Heart left ventricle (tissue), 16 donors: ENCODE measurements at regions of chr17 and their contacts with region 1.

Region 1: DNA sequence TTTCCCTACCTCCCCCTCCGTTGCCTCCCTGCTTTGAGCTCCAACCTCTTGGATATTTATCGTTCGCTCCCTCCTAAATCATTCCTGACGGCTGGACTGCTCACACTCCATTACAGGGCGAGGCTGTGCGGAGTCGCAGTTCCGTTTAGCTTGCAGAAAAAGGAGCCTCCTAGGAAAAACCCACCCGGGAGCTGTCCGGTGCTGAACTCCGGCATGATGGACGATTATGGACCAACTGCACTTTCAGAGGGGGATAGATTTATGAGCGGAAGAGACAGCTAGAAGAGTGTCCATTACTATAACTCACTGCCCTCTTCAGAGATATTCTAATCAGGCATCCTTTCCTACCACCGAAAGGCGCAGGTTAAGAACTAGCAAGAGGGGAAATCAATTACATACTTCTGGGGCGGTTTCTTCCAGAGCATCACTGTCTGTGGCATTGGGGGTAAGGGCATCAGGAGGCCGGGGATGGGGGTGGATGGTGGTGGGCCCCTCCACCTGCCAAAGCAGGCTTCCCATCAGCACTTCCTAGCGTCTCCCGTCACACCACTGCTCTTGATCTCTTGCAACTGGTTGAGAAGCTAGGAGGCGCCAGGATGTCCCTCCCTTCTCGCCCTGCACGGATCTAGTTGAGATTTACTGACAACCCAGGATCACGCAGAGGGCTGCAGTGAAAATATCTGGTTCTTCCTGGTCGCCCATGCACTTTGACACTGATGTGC is 251.2 kb downstream of the ENGASE start:
- DNase-seq: peak in 1 of 5 donors; percentile 28
- ATAC-seq: no peak
- H3K4me3 ChIP-seq: no peak overlapping the region
- H3K27ac ChIP-seq: no peak overlapping the region
- H3K4me1 ChIP-seq: no peaks in the 10 kb centered on the region
- H3K27me3 ChIP-seq: peaks cover 0 to 62% (median 3%) of the 10 kb centered on the region in 9 donors
- CTCF ChIP-seq: no peak
- POLR2A ChIP-seq: no peak

Region 2: DNA sequence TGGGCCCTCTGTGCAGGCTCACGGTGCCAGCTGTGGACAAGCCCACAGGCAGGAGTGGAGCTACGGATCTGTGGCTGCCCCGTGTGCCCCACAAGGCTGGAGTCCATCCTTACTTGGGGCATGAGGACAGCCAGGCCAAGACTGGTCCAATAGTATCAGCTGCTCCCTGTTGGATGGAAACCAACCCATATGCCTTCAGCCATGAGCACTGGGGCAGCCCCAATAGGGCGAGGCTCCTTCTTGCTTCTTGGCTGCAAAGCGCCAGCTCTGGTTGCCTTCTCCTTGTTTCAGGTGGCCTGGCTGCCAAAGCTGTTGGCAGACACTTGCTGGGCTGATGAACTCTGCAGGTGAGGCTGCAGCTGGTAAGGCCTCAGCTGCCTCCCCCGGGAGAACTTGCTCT is 63.2 kb before region 1 on chr17:
- intact Hi-C with region 1: loop called in 1 of 10 experiments (anchors 10 kb)
- DNase-seq: no peak
- ATAC-seq: no peak
- H3K4me3 ChIP-seq: no peak overlapping the region
- H3K27ac ChIP-seq: no peak overlapping the region
- H3K4me1 ChIP-seq: no peaks in the 10 kb centered on the region
- H3K27me3 ChIP-seq: peaks cover 0 to 63% (median 3%) of the 10 kb centered on the region in 9 donors
- CTCF ChIP-seq: no peak
- POLR2A ChIP-seq: no peak

Region 3: GRCh38 chr17:79269620-79270019 is 56.2 kb before region 1 on chr17:
- intact Hi-C with region 1: loop called in 2 of 10 experiments (anchors 2 to 10 kb)
- DNase-seq: no peak
- ATAC-seq: no peak
- H3K4me3 ChIP-seq: no peak overlapping the region
- H3K27ac ChIP-seq: no peak overlapping the region
- H3K4me1 ChIP-seq: no peaks in the 10 kb centered on the region
- H3K27me3 ChIP-seq: peaks cover 0 to 90% (median 23%) of the 10 kb centered on the region in 9 donors
- CTCF ChIP-seq: no peak
- POLR2A ChIP-seq: no peak

Region 4: DNA sequence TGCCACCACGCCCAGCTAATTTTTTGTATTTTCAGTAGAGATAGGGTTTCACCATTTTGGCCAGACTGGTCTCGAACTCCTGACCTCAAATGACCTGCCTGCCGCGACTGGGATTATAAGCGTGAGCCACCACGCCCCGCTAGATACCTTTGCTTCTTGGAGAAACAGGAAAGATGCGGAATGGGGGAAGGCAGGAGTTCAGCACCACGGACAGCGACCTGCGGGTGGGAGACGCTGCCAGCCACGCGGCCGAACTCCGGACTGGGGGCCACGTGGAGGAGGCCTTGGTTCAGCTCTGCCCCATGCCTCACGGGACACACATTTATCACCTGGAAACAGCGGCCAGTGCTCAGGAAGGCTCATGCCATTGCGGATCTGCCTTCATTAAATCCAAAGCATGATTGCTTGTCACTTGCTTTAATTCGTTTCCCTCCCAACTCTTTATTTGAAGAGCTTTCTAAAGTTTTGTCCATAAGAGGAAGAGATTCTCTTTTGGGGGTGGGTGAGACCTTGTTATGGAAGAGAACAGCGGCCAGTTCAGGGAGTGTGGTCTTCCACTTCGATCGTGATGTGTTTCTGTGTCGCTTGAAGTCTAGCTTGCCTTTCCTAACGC is 31.3 kb before region 1 on chr17:
- intact Hi-C with region 1: no loop called
- DNase-seq: peak; percentile 54 to 77 (median 61)
- ATAC-seq: peak in 3 of 4 donors; percentile 46 to 66 (median 51)
- H3K4me3 ChIP-seq: no peak overlapping the region
- H3K27ac ChIP-seq: no peak overlapping the region
- H3K4me1 ChIP-seq: no peaks in the 10 kb centered on the region
- H3K27me3 ChIP-seq: peaks cover 0 to 46% (median 5%) of the 10 kb centered on the region in 9 donors
- CTCF ChIP-seq: no peak
- POLR2A ChIP-seq: no peak